ENCODE measurements at regions of chr11 and their contacts with region 1.

Region 1: DNA sequence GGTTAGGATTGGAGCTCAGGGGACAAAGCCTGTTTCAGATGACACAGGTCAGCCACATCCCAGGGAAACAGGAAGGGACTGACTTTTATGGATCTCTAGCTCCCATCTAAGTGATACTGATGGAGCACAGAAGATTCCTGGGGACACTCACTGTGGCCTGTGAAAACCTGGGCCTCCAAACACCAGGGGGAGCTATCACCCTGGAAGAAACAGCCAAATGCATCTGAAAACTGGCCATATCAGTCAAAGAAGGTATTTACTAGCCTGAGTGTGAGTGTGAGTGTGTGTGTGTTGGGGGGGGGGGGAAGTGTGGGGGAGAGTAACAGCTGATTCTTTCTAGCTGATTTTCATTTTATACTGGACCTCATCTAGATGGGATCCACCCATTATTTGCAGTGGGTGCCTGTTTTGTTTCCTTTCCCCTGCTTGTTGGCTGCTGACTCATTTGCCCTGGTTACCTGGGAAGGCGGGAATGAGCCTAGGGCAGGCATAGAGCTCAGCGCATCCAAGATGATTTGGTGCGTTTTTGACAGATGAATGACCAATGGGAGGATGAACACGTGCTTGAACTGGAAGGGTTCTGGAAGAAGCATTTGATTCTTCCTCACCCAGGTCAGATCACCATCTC is 284.0 kb downstream of the KIRREL3 start:
- DNase-seq: peak in 2 of 3 donors; percentile 39 to 74
- ATAC-seq: peak; percentile 54 to 56
- H3K4me3 ChIP-seq: no peak overlapping the region
- H3K27ac ChIP-seq: no peak overlapping the region
- H3K4me1 ChIP-seq: peaks cover 5% of the 10 kb centered on the region
- H3K27me3 ChIP-seq: no peaks in the 10 kb centered on the region

Region 2: DNA sequence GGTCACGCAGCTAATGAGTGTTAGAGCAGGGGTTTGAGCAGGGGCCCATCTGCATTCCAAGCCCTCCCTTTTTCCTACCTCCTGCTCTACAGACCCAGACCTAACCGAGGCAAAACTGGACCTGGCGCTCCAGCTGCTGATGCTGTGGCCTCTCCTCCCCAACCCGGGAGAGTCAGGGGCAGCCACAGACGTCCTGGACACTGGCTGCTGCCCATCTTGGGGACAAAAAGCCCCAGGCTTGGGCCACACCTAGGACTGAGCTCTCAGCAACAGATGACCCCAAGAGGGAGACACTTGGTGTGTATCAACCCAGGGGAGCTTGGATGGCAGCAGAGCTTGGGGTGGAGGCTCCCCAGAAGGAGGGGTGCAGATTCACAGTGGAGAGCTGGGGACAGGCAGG is 188.5 kb before region 1 on chr11:
- intact Hi-C with region 1: no loop called
- DNase-seq: no peak
- ATAC-seq: no peak
- H3K4me3 ChIP-seq: no peak overlapping the region
- H3K27ac ChIP-seq: no peak overlapping the region
- H3K4me1 ChIP-seq: no peaks in the 10 kb centered on the region
- H3K27me3 ChIP-seq: no peaks in the 10 kb centered on the region

Region 3: GRCh38 chr11:126862664-126863243 is 146.2 kb after region 1 on chr11:
- intact Hi-C with region 1: loop called in 1 of 4 experiments (anchors 10 kb)
- DNase-seq: no peak
- ATAC-seq: peak in 1 of 2 donors; percentile 50
- H3K4me3 ChIP-seq: no peak overlapping the region
- H3K27ac ChIP-seq: no peak overlapping the region
- H3K4me1 ChIP-seq: no peaks in the 10 kb centered on the region
- H3K27me3 ChIP-seq: peaks cover 2% of the 10 kb centered on the region

Region 4: GRCh38 chr11:126969865-126970479 is 253.4 kb after region 1 on chr11:
- intact Hi-C with region 1: loop called in 2 of 4 experiments (anchors 5 kb)
- DNase-seq: no peak
- ATAC-seq: peak; percentile 84 to 85
- H3K4me3 ChIP-seq: no peak overlapping the region
- H3K27ac ChIP-seq: no peak overlapping the region
- H3K4me1 ChIP-seq: no peaks in the 10 kb centered on the region
- H3K27me3 ChIP-seq: no peaks in the 10 kb centered on the region

Region 5: DNA sequence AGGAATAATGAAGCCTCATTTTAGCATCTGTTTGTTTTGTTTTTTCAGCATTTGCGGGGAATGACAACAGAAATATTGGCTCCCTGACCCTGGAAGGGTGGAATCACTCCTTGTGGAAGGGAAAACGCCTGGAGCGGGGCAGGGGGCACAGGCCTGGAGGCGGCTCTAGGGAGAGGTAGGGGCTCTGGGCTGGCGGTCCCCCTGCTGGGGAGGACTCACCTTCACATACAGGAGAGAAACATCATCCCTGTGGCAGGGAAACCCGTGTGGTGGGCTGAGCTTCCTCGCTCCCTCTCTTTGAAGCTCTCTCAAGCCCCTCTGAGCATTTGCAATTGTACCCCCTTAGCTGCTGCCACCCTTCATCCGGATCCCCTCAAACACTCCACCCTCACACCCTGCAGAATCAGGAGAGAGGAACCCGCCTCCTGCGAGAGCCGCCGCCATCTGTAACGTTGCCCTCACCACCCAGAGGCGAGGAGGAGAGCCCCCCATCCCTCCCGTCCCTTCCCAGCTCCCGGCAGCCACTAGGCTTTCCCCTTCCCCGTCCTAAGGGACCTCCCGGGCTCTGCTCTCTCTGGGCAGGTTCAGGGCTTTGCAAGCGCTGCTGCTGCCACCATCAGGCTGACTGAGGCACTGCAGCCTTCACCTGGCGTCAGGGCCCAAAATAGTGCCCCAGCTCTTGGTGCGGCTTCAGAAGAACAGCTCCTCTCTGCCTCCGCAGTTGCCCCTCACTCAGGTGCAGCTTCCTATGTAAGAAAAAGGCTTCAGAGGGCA is 273.6 kb after region 1 on chr11:
- intact Hi-C with region 1: loop called (anchors 2 to 5 kb)
- DNase-seq: peak; percentile 74 to 90 (median 87)
- ATAC-seq: peak; percentile 85 to 87
- H3K4me3 ChIP-seq: no peak overlapping the region
- H3K27ac ChIP-seq: no peak overlapping the region
- H3K4me1 ChIP-seq: peaks cover 3% of the 10 kb centered on the region
- H3K27me3 ChIP-seq: no peaks in the 10 kb centered on the region

Region 6: DNA sequence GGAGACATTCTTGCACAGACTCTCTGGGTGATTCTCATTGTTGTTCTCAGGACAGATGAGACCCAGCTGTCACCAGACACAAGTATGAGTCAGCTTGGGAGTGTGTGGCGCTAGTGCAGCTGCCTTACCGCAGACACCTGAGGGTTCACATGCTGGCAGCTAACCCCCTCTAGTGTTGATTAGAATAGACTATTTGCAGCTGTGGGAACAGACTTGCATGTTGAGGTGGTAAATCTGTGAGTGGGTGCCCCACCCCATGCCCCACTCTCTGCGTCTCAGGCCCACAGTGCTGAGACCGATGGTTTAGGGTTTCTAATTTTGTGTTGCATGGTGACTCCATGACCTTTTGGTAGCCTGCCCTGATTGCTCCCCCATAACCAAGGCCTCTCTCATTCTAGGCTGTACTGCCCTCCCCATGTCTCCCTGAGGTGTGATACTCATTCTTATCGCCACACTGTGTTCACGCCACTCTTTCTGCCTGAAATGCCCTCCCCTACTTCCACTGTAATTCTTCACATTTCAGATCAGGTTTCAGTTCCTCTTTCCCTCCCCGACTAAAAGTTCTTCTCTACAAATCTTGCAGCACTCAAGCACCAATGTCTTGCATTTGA is 357.7 kb after region 1 on chr11:
- intact Hi-C with region 1: loop called in 1 of 4 experiments (anchors 5 kb)
- DNase-seq: peak in 1 of 3 donors; percentile 18
- ATAC-seq: peak; percentile 71 to 74
- H3K4me3 ChIP-seq: no peak overlapping the region
- H3K27ac ChIP-seq: no peak overlapping the region
- H3K4me1 ChIP-seq: no peaks in the 10 kb centered on the region
- H3K27me3 ChIP-seq: no peaks in the 10 kb centered on the region